ENCODE measurements at regions of chr11 and their contacts with region 1.

Region 1: GRCh38 chr11:76257074-76257719 is 50.9 kb upstream of the WNT11 start:
- DNase-seq: no peak
- H3K4me3 ChIP-seq: no peak overlapping the region
- H3K27ac ChIP-seq: no peak overlapping the region
- H3K4me1 ChIP-seq: peaks cover 0 to 8% (median 3%) of the 10 kb centered on the region in 4 experiments; a peak in 5 of 7 replicates
- H3K27me3 ChIP-seq: no peaks in the 10 kb centered on the region
- CTCF ChIP-seq: no peak
- EP300 ChIP-seq: no peak
- POLR2A ChIP-seq: no peak
- RAD21 ChIP-seq: no peak

Region 2: GRCh38 chr11:76120513-76121101 is 136.6 kb before region 1 on chr11:
- CTCF ChIA-PET with region 1: no interaction called
- POLR2A ChIA-PET with region 1: no interaction called
- DNase-seq: peak in 1 of 2 experiments; percentile 15
- H3K4me3 ChIP-seq: no peak overlapping the region
- H3K27ac ChIP-seq: no peak overlapping the region
- H3K4me1 ChIP-seq: peaks cover 4 to 19% (median 8%) of the 10 kb centered on the region in 4 experiments; a peak in 6 of 7 replicates
- H3K27me3 ChIP-seq: no peaks in the 10 kb centered on the region
- CTCF ChIP-seq: no peak
- EP300 ChIP-seq: no peak
- POLR2A ChIP-seq: no peak
- RAD21 ChIP-seq: no peak

Region 3: GRCh38 chr11:76270387-76270786 is 13.2 kb after region 1 on chr11:
- CTCF ChIA-PET with region 1: interaction called, 14 read pairs
- POLR2A ChIA-PET with region 1: no interaction called
- DNase-seq: no peak
- H3K4me3 ChIP-seq: no peak overlapping the region
- H3K27ac ChIP-seq: no peak overlapping the region
- H3K4me1 ChIP-seq: no peaks in the 10 kb centered on the region
- H3K27me3 ChIP-seq: no peaks in the 10 kb centered on the region; a peak in 1 of 7 replicates
- CTCF ChIP-seq: no peak
- EP300 ChIP-seq: no peak
- POLR2A ChIP-seq: no peak
- RAD21 ChIP-seq: no peak

Region 4: GRCh38 chr11:76279646-76280045 is 22.4 kb after region 1 on chr11:
- CTCF ChIA-PET with region 1: interaction called, 12 read pairs
- POLR2A ChIA-PET with region 1: interaction called, 3 read pairs
- DNase-seq: peak in 1 of 2 experiments; percentile 19
- H3K4me3 ChIP-seq: no peak overlapping the region
- H3K27ac ChIP-seq: no peak overlapping the region
- H3K4me1 ChIP-seq: peaks cover 5 to 33% (median 13%) of the 10 kb centered on the region in 4 experiments
- H3K27me3 ChIP-seq: peaks cover 0 to 7% (median 2%) of the 10 kb centered on the region in 4 experiments; a peak in 2 of 7 replicates
- CTCF ChIP-seq: no peak
- EP300 ChIP-seq: peak; percentile 17 to 27; a peak in 2 of 3 replicates
- POLR2A ChIP-seq: no peak
- RAD21 ChIP-seq: no peak

Region 5: GRCh38 chr11:76408171-76408965 is 151.2 kb after region 1 on chr11:
- CTCF ChIA-PET with region 1: no interaction called
- POLR2A ChIA-PET with region 1: no interaction called
- DNase-seq: no peak
- H3K4me3 ChIP-seq: no peak overlapping the region
- H3K27ac ChIP-seq: no peak overlapping the region
- H3K4me1 ChIP-seq: no peaks in the 10 kb centered on the region
- H3K27me3 ChIP-seq: no peaks in the 10 kb centered on the region; a peak in 1 of 7 replicates
- CTCF ChIP-seq: no peak
- EP300 ChIP-seq: no peak
- POLR2A ChIP-seq: no peak
- RAD21 ChIP-seq: no peak